ENCODE measurements at regions of chr2 and their contacts with region 1.

Region 1: GRCh38 chr2:204749319-204749718 is 204.0 kb downstream of the PARD3B start:
- DNase-seq: no peak
- ATAC-seq: no peak
- H3K4me3 ChIP-seq: no peak overlapping the region
- H3K27ac ChIP-seq: no peak overlapping the region
- H3K4me1 ChIP-seq: no peaks in the 10 kb centered on the region
- H3K27me3 ChIP-seq: no peaks in the 10 kb centered on the region
- CTCF ChIP-seq: no peak

Region 2: GRCh38 chr2:204628926-204629712 is 120.2 kb before region 1 on chr2:
- intact Hi-C with region 1: no loop called
- DNase-seq: no peak
- ATAC-seq: no peak
- H3K4me3 ChIP-seq: no peak overlapping the region
- H3K27ac ChIP-seq: no peak overlapping the region
- H3K4me1 ChIP-seq: no peaks in the 10 kb centered on the region
- H3K27me3 ChIP-seq: no peaks in the 10 kb centered on the region
- CTCF ChIP-seq: no peak

Region 3: GRCh38 chr2:206502729-206503128 is 1753.4 kb after region 1 on chr2:
- intact Hi-C with region 1: loop called in 1 of 2 experiments (anchors 10 kb)
- DNase-seq: no peak
- ATAC-seq: no peak
- H3K4me3 ChIP-seq: no peak overlapping the region
- H3K27ac ChIP-seq: no peak overlapping the region
- H3K4me1 ChIP-seq: peaks cover 8% of the 10 kb centered on the region
- H3K27me3 ChIP-seq: no peaks in the 10 kb centered on the region
- CTCF ChIP-seq: no peak